Panc1 (cell line): ENCODE measurements at regions of chr4 and their contacts with region 1.

Region 1: GRCh38 chr4:10983268-10983667 is 298.7 kb upstream of the CLNK start:
- DNase-seq: no peak
- ATAC-seq: no peak
- H3K4me3 ChIP-seq: no peak overlapping the region
- H3K27ac ChIP-seq: no peak overlapping the region
- H3K4me1 ChIP-seq: no peaks in the 10 kb centered on the region
- H3K27me3 ChIP-seq: no peaks in the 10 kb centered on the region
- CTCF ChIP-seq: no peak

Region 2: GRCh38 chr4:12555011-12555410 is 1571.7 kb after region 1 on chr4:
- CTCF ChIA-PET with region 1: interaction called, 10 read pairs
- POLR2A ChIA-PET with region 1: no interaction called
- in situ Hi-C with region 1: no loop called
- intact Hi-C with region 1: no loop called
- DNase-seq: no peak
- ATAC-seq: no peak
- H3K4me3 ChIP-seq: no peak overlapping the region
- H3K27ac ChIP-seq: no peak overlapping the region
- H3K4me1 ChIP-seq: no peaks in the 10 kb centered on the region
- H3K27me3 ChIP-seq: no peaks in the 10 kb centered on the region
- CTCF ChIP-seq: no peak